BJ (cell line): ENCODE measurements at regions of chr6 and their contacts with region 1.

Region 1: GRCh38 chr6:139364302-139364981 is 10.0 kb downstream of the CITED2 start:
- DNase-seq: no peak
- H3K4me3 ChIP-seq: no peak overlapping the region
- H3K27me3 ChIP-seq: no peaks in the 10 kb centered on the region
- CTCF ChIP-seq: peak; percentile 48

Region 2: DNA sequence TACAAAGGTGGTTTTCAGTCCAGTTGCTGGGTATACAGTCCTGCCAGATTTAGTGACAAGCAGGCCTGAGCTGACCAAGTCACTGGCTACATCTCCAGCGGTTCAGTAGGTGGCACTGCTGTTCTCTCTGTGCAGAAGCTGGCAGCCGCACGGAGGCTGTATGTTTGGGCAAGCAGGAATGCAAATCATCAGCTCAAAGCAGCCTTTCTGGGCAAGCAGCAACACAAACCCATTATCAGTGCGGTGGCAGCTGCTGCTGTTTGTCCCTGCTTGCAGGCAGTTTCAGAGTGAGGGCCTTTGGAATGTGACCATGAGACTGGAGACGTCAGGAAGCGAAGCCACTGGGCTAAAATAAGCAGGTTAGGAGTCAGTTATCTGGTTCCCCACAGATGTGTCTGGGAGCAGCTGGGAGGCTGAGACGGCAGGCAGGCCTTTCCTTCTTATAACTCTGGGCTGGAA is 145.1 kb before region 1 on chr6:
- CTCF ChIA-PET with region 1: interaction called, 56 read pairs
- POLR2A ChIA-PET with region 1: interaction called, 5 read pairs
- DNase-seq: peak; percentile 65
- H3K4me3 ChIP-seq: no peak overlapping the region
- H3K27me3 ChIP-seq: no peaks in the 10 kb centered on the region
- CTCF ChIP-seq: peak; percentile 90

Region 3: DNA sequence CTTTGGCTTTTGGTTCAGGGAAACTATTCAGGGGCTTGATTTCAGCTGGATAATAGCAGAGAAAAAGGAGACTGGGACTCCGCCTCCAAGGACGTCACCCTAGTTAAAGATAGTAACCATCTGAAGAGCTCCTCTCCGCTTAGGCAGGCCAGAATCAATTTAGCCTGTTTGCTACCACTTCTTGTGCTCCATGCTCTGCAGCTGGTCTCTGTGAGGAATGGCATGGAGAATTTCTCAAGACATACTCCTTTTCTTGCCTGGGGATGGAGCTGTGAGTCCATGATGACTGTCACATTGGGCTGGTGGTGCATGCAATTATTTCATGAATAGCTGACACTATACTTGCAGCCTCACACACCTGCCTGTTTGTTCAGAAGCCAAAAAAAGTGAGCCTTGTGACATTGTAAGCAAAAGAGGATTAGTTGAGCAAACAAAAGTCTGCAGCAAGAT is 134.0 kb before region 1 on chr6:
- CTCF ChIA-PET with region 1: interaction called, 18 read pairs
- POLR2A ChIA-PET with region 1: no interaction called
- DNase-seq: no peak
- H3K4me3 ChIP-seq: no peak overlapping the region
- H3K27me3 ChIP-seq: no peaks in the 10 kb centered on the region
- CTCF ChIP-seq: 0 out of 2 replicates have a peak, but pooled peaks have one; percentile 2

Region 4: GRCh38 chr6:139395891-139396301 is 31.5 kb after region 1 on chr6:
- CTCF ChIA-PET with region 1: no interaction called
- POLR2A ChIA-PET with region 1: no interaction called
- DNase-seq: no peak
- H3K4me3 ChIP-seq: no peak overlapping the region
- H3K27me3 ChIP-seq: no peaks in the 10 kb centered on the region
- CTCF ChIP-seq: no peak

Region 5: GRCh38 chr6:139490482-139490881 is 126.0 kb after region 1 on chr6:
- CTCF ChIA-PET with region 1: no interaction called
- POLR2A ChIA-PET with region 1: no interaction called
- DNase-seq: no peak
- H3K4me3 ChIP-seq: no peak overlapping the region
- H3K27me3 ChIP-seq: no peaks in the 10 kb centered on the region
- CTCF ChIP-seq: no peak

Region 6: GRCh38 chr6:140636271-140636907 is 1271.9 kb after region 1 on chr6:
- CTCF ChIA-PET with region 1: no interaction called
- POLR2A ChIA-PET with region 1: no interaction called
- DNase-seq: no peak
- H3K4me3 ChIP-seq: no peak overlapping the region
- H3K27me3 ChIP-seq: no peaks in the 10 kb centered on the region
- CTCF ChIP-seq: no peak